ENCODE measurements at regions of chr12 and their contacts with region 1.

Region 1: DNA sequence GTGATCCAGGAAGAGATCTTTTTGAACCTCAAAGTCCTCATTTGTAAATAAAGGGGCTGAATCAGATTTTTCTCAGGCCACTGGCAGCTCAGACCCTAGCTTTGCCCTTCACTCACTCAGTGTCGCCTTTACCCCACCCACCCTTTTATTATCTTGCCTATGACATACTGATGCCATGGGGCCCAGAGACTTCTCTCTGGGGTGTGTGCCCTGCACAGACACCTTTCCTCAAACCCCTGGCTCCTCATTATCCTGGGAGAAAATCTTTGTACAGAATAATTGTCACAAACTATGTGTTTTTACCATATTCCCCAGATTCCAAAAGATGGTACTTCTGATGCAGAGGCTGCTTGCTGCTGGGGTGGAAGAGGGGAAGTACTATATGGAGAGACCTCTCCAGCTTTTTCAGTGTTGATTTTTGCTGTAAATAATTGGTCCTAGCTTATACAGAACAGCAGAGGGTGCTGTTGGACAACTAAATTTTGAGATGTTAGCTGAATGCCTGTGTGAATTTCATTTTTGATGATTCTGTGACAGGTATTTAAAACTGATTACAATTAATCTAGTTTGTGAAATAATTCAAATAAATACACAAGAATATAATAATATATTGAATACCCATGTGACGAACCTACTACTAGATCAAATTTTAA is 53.9 kb upstream of the DCD start:
- DNase-seq: peak; percentile 60
- H3K4me3 Mint-ChIP-seq: no peak overlapping the region
- H3K27ac Mint-ChIP-seq: no peak overlapping the region
- H3K4me1 Mint-ChIP-seq: no peaks in the 10 kb centered on the region
- H3K27me3 Mint-ChIP-seq: peaks cover 75% of the 10 kb centered on the region
- CTCF ChIP-seq: peak; percentile 45

Region 2: DNA sequence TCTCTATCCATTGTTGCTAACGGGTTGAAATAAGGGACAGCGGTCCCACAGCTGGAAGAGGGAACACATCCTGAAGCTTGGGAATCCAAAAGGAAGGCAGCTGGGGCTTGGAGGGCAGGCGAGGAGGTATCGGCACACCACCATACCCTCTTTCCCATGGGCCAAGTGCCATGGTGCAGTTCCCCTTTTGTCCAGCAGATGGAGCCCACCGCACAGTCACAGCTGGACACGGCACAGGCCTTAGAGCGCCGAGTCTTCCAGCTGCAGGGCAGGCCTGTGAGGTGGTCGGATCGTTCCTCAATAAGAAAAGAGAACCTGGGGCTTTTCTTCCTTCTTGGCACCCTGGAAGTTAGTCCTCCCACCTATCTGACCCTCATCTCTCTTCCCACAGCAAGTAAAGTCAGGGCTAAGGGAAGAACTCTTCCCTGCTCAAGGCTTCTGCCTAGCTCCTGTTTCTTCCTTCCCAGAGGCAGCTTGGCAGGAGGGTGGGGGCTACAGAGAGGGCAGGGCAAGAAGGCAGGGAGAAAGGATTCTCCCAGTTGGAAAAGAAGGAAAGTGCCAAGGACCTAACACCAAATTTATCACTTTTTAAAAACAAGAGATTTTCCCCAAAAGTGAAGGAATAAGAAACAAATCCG is 122.3 kb before region 1 on chr12:
- CTCF ChIA-PET with region 1: interaction called, 13 read pairs
- POLR2A ChIA-PET with region 1: no interaction called
- intact Hi-C with region 1: no loop called
- DNase-seq: peak; percentile 83
- H3K4me3 Mint-ChIP-seq: no peak overlapping the region
- H3K27ac Mint-ChIP-seq: no peak overlapping the region
- H3K4me1 Mint-ChIP-seq: no peaks in the 10 kb centered on the region
- H3K27me3 Mint-ChIP-seq: peaks cover 62% of the 10 kb centered on the region
- CTCF ChIP-seq: peak; percentile 99

Region 3: DNA sequence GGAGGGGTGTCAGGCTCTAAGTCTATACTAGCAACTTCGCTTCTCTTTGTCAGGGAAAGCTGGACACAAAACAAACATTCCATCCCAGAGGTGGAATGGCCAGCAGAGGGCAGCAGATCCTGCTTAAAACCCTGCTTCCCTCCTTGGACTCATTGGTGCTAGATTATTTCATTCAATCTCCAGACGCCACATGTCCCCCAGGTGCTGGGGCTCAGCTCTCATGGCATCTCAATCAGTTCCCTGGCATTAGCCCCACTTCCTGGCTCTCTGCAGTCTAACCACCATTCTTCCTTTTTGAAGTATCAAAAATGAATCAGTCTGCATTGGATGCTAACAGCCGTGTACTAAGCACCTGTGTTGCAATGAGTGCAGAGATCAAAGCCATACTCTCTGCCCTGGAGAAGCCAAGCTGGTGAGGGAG is 105.5 kb before region 1 on chr12:
- CTCF ChIA-PET with region 1: interaction called, 7 read pairs
- POLR2A ChIA-PET with region 1: no interaction called
- intact Hi-C with region 1: loop called (anchors 1 kb)
- DNase-seq: peak; percentile 80
- H3K4me3 Mint-ChIP-seq: no peak overlapping the region
- H3K27ac Mint-ChIP-seq: no peak overlapping the region
- H3K4me1 Mint-ChIP-seq: no peaks in the 10 kb centered on the region
- H3K27me3 Mint-ChIP-seq: peaks cover 27% of the 10 kb centered on the region
- CTCF ChIP-seq: peak; percentile 68

Region 4: DNA sequence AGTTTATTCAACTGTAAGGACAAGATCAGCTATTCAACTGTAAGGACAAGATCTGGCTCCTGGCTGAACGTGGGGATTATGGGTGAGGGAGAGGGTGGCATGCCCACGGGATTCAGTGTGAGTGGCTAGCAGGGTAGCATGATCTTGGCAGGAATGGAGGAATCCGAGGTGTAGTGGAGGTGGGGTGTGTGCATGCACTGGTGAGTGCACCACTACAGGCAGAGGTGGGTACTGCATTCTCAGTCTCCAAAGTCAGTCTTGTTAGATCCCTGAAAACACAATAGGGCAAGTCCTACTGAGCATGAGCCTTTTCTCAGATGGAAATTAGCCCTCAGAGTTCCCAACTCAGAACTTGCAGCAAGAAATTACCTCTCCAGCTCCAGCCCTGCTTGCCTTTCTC is 21.7 kb before region 1 on chr12:
- CTCF ChIA-PET with region 1: interaction called, 11 read pairs
- POLR2A ChIA-PET with region 1: no interaction called
- intact Hi-C with region 1: no loop called
- DNase-seq: peak; percentile 51
- H3K4me3 Mint-ChIP-seq: no peak overlapping the region
- H3K27ac Mint-ChIP-seq: no peak overlapping the region
- H3K4me1 Mint-ChIP-seq: peaks cover 7% of the 10 kb centered on the region
- H3K27me3 Mint-ChIP-seq: peaks cover 72% of the 10 kb centered on the region
- CTCF ChIP-seq: peak; percentile 44

Region 5: GRCh38 chr12:54689034-54689372 is 13.1 kb before region 1 on chr12:
- CTCF ChIA-PET with region 1: interaction called, 26 read pairs
- POLR2A ChIA-PET with region 1: interaction called, 4 read pairs
- intact Hi-C with region 1: no loop called
- DNase-seq: no peak
- H3K4me3 Mint-ChIP-seq: no peak overlapping the region
- H3K27ac Mint-ChIP-seq: no peak overlapping the region
- H3K4me1 Mint-ChIP-seq: peaks cover 7% of the 10 kb centered on the region
- H3K27me3 Mint-ChIP-seq: peaks cover 94% of the 10 kb centered on the region
- CTCF ChIP-seq: no peak

Region 6: DNA sequence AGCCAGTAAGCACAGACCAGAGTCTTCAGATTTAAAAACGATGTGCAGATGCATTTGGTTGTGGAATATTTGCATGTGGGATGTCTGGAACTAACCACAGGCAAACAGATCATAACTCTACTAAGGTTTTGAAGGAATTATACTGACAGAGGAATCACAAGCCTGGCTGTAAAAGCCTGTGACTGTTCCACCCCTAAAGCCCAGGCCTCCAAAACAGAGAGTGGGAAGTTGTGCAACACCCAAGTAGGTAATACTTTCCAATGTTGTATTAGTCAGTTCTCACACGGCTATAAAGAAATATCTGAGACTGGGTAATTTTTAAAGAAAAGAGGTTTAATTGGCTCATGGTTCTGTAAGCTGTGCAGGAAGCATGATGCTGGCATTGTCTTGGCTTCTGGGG is 14.2 kb after region 1 on chr12:
- CTCF ChIA-PET with region 1: interaction called, 10 read pairs
- POLR2A ChIA-PET with region 1: no interaction called
- intact Hi-C with region 1: no loop called
- DNase-seq: peak; percentile 23
- H3K4me3 Mint-ChIP-seq: no peak overlapping the region
- H3K27ac Mint-ChIP-seq: no peak overlapping the region
- H3K4me1 Mint-ChIP-seq: no peaks in the 10 kb centered on the region
- H3K27me3 Mint-ChIP-seq: peaks cover 91% of the 10 kb centered on the region
- CTCF ChIP-seq: no peak

Region 7: DNA sequence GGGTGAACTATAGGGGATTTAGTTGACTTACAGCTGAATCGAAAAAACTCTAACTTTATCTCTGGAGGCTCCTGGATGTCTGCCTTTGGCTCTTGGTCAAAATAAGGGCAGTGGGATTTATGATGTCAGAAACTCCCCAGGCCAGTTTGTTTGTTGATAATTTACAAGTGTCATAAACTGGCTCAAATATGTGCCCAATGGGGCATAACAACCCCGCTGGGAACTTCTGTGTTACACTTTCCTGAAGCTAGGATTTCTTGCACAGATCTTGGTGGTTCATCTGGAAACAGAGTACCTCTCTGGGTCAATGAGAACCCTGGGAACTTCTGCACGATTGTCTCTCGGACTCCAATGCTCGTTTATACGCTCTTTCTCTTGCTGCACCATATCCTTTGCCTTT is 93.6 kb after region 1 on chr12:
- CTCF ChIA-PET with region 1: no interaction called
- POLR2A ChIA-PET with region 1: no interaction called
- intact Hi-C with region 1: no loop called
- DNase-seq: no peak
- H3K4me3 Mint-ChIP-seq: no peak overlapping the region
- H3K27ac Mint-ChIP-seq: no peak overlapping the region
- H3K4me1 Mint-ChIP-seq: no peaks in the 10 kb centered on the region
- H3K27me3 Mint-ChIP-seq: peaks cover 24% of the 10 kb centered on the region
- CTCF ChIP-seq: no peak

Measured in MCF 10A (cell line).